A673 (cell line): ENCODE measurements at regions of chr12 and their contacts with region 1.

Region 1: GRCh38 chr12:38175538-38175937 is 141.0 kb upstream of the ALG10B start:
- DNase-seq: no peak
- H3K4me3 ChIP-seq: no peak overlapping the region
- H3K27ac ChIP-seq: no peak overlapping the region
- H3K4me1 ChIP-seq: no peaks in the 10 kb centered on the region
- H3K27me3 ChIP-seq: no peaks in the 10 kb centered on the region
- CTCF ChIP-seq: no peak

Region 2: DNA sequence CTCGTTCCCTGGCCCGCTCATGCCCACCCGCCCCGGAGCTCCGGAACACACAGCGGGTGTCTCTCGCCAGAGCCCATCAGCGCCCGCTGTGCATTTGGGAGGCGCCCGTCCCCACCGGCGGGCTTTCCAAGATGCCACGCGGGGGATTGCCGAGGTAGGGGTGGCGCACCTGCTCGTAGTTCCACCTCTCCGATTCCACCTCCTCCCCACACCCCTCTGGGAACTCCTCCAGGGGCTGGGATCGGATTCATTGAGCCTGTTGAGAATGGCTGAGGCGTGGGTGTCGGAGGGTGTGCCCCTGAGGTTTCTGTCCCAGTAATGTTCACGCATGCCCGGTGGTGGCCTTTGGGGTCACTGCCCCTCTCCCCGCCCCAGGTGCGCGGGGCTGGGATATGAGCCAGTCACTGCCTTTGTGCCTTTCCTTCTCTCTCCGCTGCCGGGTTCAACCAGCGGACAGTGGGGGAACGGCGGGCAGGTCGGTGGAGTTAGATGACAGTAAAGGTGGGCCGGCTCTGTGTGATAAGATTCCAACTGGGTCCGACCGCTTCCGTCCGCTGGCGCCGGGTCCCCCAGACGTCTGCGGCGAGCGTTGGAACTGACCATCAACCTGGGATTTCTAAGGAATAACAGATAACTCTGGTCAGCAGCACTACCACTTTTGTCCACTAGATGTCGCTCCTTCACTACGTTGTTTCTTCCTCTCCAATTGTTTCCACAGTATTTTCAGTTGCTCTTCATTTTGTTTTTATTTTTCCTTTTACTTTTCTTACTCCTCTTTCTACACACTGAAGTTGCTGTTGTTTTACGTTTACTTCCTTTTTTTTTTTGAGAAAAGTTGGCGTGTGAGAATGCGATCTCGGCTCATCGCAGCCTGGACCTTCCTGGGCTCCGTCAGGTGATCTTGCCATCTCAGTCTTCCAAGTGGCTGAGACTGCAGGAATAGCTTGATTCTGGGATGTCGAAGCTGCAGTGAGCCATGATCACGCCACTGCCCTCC is 37.0 kb before region 1 on chr12:
- CTCF ChIA-PET with region 1: no interaction called
- POLR2A ChIA-PET with region 1: interaction called, 17 read pairs
- intact Hi-C with region 1: no loop called
- DNase-seq: peak; percentile 62
- H3K4me3 ChIP-seq: peak overlapping the region; percentile 50
- H3K27ac ChIP-seq: no peak overlapping the region
- H3K4me1 ChIP-seq: no peaks in the 10 kb centered on the region
- H3K27me3 ChIP-seq: no peaks in the 10 kb centered on the region
- CTCF ChIP-seq: peak; percentile 94

Region 3: DNA sequence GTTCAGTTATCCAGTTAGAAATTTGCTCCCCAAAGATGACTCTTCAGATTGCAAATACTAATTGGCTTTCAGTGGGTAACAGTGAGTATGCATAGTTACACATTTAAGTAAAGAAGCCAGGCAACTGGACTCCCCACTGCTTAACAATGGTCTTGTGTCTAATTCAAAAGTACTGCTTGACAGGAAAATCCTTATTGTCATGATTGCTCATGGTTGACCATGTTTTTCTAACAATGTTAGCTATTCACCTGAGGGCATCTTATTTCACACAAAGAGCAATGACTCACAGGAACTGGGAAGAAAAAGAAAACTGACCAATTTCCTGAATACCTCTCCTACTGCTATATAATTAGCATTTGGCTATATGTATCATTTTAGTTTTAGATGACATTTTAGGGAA is 107.3 kb after region 1 on chr12:
- CTCF ChIA-PET with region 1: no interaction called
- POLR2A ChIA-PET with region 1: no interaction called
- intact Hi-C with region 1: loop called (anchors 10 kb)
- DNase-seq: peak; percentile 1
- H3K4me3 ChIP-seq: no peak overlapping the region
- H3K27ac ChIP-seq: no peak overlapping the region
- H3K4me1 ChIP-seq: no peaks in the 10 kb centered on the region
- H3K27me3 ChIP-seq: no peaks in the 10 kb centered on the region
- CTCF ChIP-seq: no peak